A673 (cell line): ENCODE measurements at regions of chr7 and their contacts with region 1.

Region 1: GRCh38 chr7:11557627-11558026 is 274.4 kb downstream of the THSD7A start:
- DNase-seq: peak; percentile 85
- H3K4me3 ChIP-seq: no peak overlapping the region
- H3K27ac ChIP-seq: no peak overlapping the region
- H3K4me1 ChIP-seq: peaks cover 7% of the 10 kb centered on the region
- H3K27me3 ChIP-seq: no peaks in the 10 kb centered on the region
- CTCF ChIP-seq: peak; percentile 75

Region 2: DNA sequence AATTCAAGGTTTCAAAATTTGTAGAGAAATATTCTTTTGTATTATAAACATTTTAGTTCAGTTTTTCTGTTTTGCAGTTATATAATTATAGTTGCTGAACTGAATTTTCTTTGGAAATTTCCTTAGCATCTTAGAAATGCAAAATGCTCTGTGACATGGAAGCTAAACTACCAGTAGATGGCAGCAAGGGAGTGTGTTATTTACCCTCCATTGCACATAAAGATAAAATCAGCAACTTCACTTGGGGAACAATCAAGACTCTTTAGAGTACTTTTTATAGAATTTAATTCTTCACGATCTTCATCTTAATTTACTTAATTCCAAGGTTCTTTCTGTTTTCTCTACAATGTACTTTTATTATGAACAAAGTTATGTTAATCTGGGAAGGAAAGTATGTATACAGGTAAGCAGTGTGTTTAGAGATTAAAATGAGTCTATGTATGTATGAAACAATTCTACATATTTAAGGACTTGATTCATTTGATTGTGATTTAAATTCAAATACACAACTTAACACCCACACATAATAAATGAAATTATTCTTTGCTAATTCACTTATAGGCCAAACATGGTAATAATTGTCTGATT is 129.8 kb before region 1 on chr7:
- CTCF ChIA-PET with region 1: no interaction called
- POLR2A ChIA-PET with region 1: no interaction called
- intact Hi-C with region 1: loop called (anchors 1 kb)
- DNase-seq: peak; percentile 74
- H3K4me3 ChIP-seq: no peak overlapping the region
- H3K27ac ChIP-seq: no peak overlapping the region
- H3K4me1 ChIP-seq: no peaks in the 10 kb centered on the region
- H3K27me3 ChIP-seq: no peaks in the 10 kb centered on the region
- CTCF ChIP-seq: peak; percentile 87

Region 3: GRCh38 chr7:11492307-11492706 is 65.3 kb before region 1 on chr7:
- CTCF ChIA-PET with region 1: no interaction called
- POLR2A ChIA-PET with region 1: no interaction called
- intact Hi-C with region 1: loop called (anchors 5 kb)
- DNase-seq: no peak
- H3K4me3 ChIP-seq: no peak overlapping the region
- H3K27ac ChIP-seq: no peak overlapping the region
- H3K4me1 ChIP-seq: no peaks in the 10 kb centered on the region
- H3K27me3 ChIP-seq: no peaks in the 10 kb centered on the region
- CTCF ChIP-seq: no peak

Region 4: DNA sequence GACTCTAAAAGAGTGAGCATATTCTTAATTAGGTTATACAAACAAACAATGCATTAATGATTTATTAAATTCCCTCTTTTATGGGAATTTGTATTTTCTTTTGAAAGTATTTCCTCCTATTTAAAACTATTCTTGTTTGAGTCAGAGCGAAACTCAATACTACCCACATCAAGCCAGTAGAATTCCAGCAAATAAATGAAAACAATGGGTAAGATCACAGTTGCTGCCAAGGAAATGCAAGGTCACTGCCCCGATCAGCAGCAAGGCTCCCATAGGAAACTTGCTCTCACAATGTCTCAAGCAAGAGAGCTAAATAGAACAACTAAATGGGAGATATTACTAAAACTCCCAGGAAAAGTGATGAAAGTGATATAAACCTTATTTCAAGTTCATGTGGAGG is 68.0 kb after region 1 on chr7:
- CTCF ChIA-PET with region 1: no interaction called
- POLR2A ChIA-PET with region 1: no interaction called
- intact Hi-C with region 1: no loop called
- DNase-seq: no peak
- H3K4me3 ChIP-seq: no peak overlapping the region
- H3K27ac ChIP-seq: no peak overlapping the region
- H3K4me1 ChIP-seq: no peaks in the 10 kb centered on the region
- H3K27me3 ChIP-seq: no peaks in the 10 kb centered on the region
- CTCF ChIP-seq: no peak